GM10248 (cell line): ENCODE measurements at regions of chr5 and their contacts with region 1.

Region 1: DNA sequence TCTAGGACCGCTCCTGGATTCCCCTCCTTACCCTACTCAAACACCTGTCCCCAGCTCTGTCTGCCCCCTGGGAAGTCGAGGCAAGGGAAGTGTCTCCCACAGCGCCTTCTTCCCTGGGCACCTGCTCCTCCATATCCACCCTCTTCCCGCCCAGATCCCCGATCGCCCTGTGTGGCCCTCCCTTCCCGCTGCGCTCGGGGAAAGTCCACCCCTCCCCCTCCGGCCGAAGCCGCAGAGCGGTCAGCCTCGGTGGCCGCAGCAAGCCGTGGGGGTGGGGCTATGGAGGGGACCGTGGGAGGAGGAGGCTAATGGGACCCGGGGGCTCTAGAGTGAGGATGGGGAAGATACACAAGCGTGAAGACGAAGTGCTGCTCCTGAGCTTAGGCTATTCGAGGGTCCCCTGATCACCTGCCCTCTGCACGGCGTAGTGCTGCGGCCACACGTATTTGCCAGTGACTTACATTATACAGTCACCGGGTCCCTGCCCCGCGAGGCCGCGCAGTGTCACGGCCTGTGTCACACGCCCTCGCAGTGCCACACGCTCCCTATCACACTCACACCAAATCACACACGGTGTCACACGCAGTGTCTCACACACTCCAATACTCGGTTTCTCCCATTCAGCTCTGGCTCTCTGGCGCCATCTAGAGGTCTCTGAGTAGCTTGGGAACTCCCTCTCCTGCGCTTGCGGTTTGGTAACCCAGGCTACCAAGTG is 658 bp upstream of the PCDH1 start:
- DNase-seq: peak; percentile 84
- CTCF ChIP-seq: peak; percentile 89

Region 2: GRCh38 chr5:141657937-141658545 is 220.8 kb before region 1 on chr5:
- CTCF ChIA-PET with region 1: interaction called, 10 read pairs
- POLR2A ChIA-PET with region 1: no interaction called
- DNase-seq: peak; percentile 56
- CTCF ChIP-seq: no peak

Region 3: GRCh38 chr5:141765896-141766551 is 112.8 kb before region 1 on chr5:
- CTCF ChIA-PET with region 1: interaction called, 12 read pairs
- POLR2A ChIA-PET with region 1: no interaction called
- DNase-seq: no peak
- CTCF ChIP-seq: no peak

Region 4: DNA sequence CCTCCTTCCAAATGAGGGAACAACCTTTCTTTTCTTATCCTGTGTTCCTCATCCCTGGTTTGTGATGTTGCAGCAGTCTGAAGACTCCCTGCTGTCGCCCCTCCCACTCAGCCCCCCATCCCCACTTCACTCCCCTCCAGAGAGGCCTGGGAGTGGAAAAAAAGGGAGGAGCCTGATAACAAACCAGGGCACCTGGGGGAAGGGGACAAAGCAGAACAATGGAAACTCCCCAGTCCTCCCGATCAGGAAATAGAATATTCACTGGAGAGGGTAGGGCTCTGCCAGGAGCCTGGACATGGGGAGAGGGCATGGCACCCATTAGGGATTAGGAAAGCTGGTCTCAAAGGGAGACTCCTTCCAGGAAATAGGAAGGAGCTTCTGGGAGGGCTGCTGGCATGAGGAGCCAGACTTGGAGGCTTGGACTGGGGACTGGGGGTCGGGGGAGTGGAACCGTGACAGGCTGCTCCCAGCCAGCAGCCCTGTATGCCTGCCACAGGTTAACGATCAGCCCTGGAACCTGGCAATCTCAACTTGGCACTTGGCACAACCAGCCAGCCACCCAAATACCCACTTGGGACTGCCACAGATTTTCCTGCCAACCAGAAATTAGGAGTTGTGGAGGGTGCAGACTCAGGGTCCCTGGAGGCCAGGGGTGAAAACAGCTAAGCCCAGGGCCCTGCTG is 20.6 kb before region 1 on chr5:
- CTCF ChIA-PET with region 1: interaction called, 10 read pairs
- POLR2A ChIA-PET with region 1: no interaction called
- DNase-seq: no peak
- CTCF ChIP-seq: no peak

Region 5: DNA sequence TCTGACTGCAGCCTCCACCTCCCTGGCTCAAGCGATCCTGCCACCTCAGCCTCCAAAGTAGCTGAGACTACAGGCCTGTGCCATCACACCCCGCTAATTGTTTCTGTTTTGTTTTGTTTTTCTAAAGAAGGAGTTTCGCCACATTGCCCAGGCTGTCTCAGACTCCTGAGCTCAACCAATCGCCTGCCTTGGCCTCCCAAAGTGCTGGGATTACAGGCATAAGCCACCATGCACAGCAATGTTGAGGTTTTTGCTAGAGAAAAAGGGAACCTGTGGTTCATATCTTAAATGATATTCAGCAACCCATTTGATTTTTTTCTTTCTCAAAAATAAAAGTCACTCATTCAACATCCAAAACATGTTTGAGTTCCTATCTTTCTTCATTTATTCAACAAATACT is 24.4 kb after region 1 on chr5:
- CTCF ChIA-PET with region 1: interaction called, 19 read pairs
- POLR2A ChIA-PET with region 1: no interaction called
- DNase-seq: no peak
- CTCF ChIP-seq: no peak

Region 6: DNA sequence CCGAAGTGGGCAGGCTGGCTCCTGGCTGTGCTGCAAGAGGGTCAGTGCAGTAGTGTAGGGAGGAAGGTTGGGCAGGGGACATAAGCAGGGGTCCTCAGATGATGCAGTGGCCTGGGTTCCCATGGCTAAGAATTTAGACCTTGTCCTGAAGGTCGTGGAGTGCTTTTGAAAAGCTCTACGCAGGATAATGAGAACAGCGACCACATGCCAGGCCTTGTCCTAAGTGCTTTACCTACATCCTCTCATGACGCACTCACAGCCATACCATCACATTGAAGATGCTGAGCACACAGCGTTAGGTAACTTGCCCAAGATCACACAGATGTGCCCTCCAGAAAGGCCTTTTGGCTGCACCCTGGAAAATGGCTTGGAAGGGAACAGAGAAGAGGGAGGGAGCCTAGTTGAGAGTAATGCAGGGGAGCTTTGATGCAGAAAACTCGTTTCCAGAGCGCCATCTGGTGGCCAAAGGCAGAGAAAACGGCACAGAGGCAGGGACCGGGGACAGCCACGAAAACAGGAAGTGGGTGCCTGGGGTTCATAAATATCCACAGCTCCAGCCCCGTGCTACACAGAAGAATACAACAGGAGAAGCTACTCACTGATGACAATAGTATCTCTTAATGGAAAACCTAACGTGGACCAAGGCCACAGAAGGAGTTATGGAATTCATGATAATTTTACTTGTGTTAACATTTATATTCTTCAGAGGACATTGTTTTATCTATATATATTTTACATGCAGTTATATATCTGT is 81.8 kb after region 1 on chr5:
- CTCF ChIA-PET with region 1: interaction called, 26 read pairs
- POLR2A ChIA-PET with region 1: no interaction called
- DNase-seq: peak; percentile 87
- CTCF ChIP-seq: peak; percentile 87

Region 7: GRCh38 chr5:142079306-142079721 is 200.4 kb after region 1 on chr5:
- CTCF ChIA-PET with region 1: no interaction called
- POLR2A ChIA-PET with region 1: no interaction called
- DNase-seq: no peak
- CTCF ChIP-seq: no peak